WTC11 (cell line): ENCODE measurements at regions of chr6 and their contacts with region 1.

Region 1: DNA sequence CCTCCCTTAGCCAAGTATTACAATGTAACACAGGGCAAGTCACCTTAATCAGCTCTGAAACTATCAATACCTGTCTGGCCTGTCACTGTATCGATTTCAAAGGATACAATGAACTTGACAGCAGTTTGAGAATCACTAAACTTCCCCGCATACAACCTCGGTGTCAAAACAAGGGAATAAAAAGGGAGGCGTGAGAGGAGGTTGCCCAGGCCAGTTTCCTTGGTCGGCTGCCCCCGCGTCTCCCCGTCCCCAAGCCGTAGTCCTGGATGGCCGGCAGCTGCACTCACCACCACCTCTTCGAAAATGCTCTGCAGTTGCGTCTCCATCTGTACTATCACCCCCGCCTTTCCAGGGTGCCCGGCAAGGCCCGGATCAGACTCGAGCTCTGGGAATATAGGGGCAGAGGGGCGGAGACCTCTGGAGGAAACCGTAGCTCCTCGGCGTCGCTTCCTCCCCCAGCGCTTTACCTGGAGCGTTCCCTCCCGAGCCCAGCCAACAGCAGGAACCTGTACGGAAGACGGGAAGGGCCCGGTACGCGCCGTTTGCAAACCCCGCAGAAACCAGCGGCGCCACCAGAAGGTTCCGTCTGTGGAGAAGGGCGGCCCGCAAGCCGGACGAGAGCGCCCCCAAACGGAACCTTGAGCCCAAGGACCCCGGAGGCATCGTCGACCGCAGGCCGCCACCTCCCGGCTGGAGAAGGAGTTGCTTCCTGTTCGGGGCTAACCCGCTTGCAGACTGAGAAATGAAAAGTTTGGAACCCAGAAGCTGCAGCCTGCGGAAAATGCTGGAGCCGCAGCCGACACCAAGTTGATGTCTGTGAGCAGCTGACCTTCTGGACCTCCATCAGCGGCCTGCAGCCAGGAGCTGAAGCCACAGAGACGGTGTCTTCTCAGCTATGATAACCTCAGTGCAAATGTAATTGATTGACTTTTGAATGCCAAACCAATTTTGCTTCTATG is at the start of gene MED23:
- DNase-seq: peak; percentile 98
- ATAC-seq: peak; percentile 98
- H3K4me3 Mint-ChIP-seq: peak within 1 kb of the TSS; percentile 98
- H3K27ac Mint-ChIP-seq: peak within 1 kb of the TSS; percentile 99
- H3K4me1 Mint-ChIP-seq: peaks cover 13% of the 10 kb centered on the region
- H3K27me3 Mint-ChIP-seq: peaks cover 22% of the 10 kb centered on the region
- CTCF ChIP-seq: peak; percentile 95
- total RNA-seq, gene MED23: 18.0 to 19.0 TPM (median 18.3 TPM) in 3 replicates

Region 2: GRCh38 chr6:131182991-131183425 is 445.0 kb before region 1 on chr6:
- CTCF ChIA-PET with region 1: interaction called, 10 read pairs
- POLR2A ChIA-PET with region 1: no interaction called
- DNase-seq: no peak
- ATAC-seq: peak; percentile 80
- H3K4me3 Mint-ChIP-seq: no peak overlapping the region
- H3K27ac Mint-ChIP-seq: peak overlapping the region; percentile 94
- H3K4me1 Mint-ChIP-seq: peaks cover 16% of the 10 kb centered on the region
- H3K27me3 Mint-ChIP-seq: no peaks in the 10 kb centered on the region
- CTCF ChIP-seq: no peak

Region 3: GRCh38 chr6:131400054-131400781 is 227.8 kb before region 1 on chr6:
- CTCF ChIA-PET with region 1: no interaction called
- POLR2A ChIA-PET with region 1: no interaction called
- DNase-seq: no peak
- ATAC-seq: no peak
- H3K4me3 Mint-ChIP-seq: no peak overlapping the region
- H3K27ac Mint-ChIP-seq: peak overlapping the region; percentile 43
- H3K4me1 Mint-ChIP-seq: peaks cover 11% of the 10 kb centered on the region
- H3K27me3 Mint-ChIP-seq: peaks cover 25% of the 10 kb centered on the region
- CTCF ChIP-seq: no peak

Region 4: DNA sequence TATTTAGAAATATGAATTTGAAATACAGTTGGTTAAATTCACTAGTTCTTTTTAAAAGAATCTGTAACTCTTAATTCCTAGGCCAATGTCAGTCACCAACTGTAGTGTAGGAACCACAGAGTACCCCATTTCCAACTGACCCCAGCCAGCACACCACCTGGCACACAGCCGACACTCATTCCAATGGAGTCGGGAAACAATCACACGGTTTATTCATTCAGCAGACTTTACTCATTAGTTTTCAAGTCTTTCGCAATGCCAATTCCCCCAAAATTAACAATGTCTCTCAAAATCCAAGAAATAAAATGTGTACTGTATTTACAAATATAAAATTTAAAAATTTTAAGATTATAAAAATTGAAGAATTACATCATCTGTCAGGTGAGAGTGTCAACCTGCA is 41.5 kb before region 1 on chr6:
- CTCF ChIA-PET with region 1: interaction called, 20 read pairs
- POLR2A ChIA-PET with region 1: no interaction called
- DNase-seq: no peak
- ATAC-seq: no peak
- H3K4me3 Mint-ChIP-seq: no peak overlapping the region
- H3K27ac Mint-ChIP-seq: no peak overlapping the region
- H3K4me1 Mint-ChIP-seq: no peaks in the 10 kb centered on the region
- H3K27me3 Mint-ChIP-seq: no peaks in the 10 kb centered on the region
- CTCF ChIP-seq: no peak

Region 5: GRCh38 chr6:131615275-131615674 is 12.7 kb before region 1 on chr6:
- CTCF ChIA-PET with region 1: interaction called, 24 read pairs
- POLR2A ChIA-PET with region 1: no interaction called
- DNase-seq: no peak
- ATAC-seq: no peak
- H3K4me3 Mint-ChIP-seq: no peak overlapping the region
- H3K27ac Mint-ChIP-seq: no peak overlapping the region
- H3K4me1 Mint-ChIP-seq: no peaks in the 10 kb centered on the region
- H3K27me3 Mint-ChIP-seq: no peaks in the 10 kb centered on the region
- CTCF ChIP-seq: no peak

Region 6: GRCh38 chr6:131694831-131695426 is 66.9 kb after region 1 on chr6:
- CTCF ChIA-PET with region 1: interaction called, 13 read pairs
- POLR2A ChIA-PET with region 1: no interaction called
- DNase-seq: peak; percentile 68
- ATAC-seq: peak; percentile 99
- H3K4me3 Mint-ChIP-seq: no peak overlapping the region
- H3K27ac Mint-ChIP-seq: no peak overlapping the region
- H3K4me1 Mint-ChIP-seq: peaks cover 9% of the 10 kb centered on the region
- H3K27me3 Mint-ChIP-seq: peaks cover 20% of the 10 kb centered on the region
- CTCF ChIP-seq: peak; percentile 62